ENCODE measurements at regions of chr4 and their contacts with region 1.

Region 1: DNA sequence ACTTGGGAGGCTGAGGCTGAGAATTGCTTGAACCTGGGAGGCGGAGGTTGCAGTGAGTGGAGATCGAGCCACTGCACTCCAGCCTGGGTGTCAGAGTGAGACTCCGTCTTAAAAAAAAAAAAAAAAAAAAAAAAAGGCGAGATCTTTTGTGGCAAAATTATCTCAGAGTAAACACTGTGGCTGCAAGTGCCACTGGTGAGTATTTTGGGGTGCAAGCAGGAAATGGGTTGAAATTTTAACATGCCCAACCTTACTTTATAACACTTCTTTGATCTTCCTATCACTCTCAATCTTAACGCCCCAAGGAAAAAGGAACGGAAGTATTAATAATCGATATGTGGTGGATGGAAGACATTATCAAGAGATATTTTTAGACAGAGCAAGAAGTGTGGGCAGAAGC is 32.1 kb downstream of the SLC34A2 start:
- DNase-seq: no peak
- ATAC-seq: no peak
- H3K4me3 ChIP-seq: no peak overlapping the region
- H3K27ac ChIP-seq: no peak overlapping the region
- H3K4me1 ChIP-seq: no peaks in the 10 kb centered on the region
- H3K27me3 ChIP-seq: no peaks in the 10 kb centered on the region
- CTCF ChIP-seq: no peak

Region 2: GRCh38 chr4:25477221-25477620 is 210.6 kb before region 1 on chr4:
- CTCF ChIA-PET with region 1: interaction called, 11 read pairs
- POLR2A ChIA-PET with region 1: no interaction called
- in situ Hi-C with region 1: no loop called
- intact Hi-C with region 1: no loop called
- DNase-seq: no peak
- ATAC-seq: no peak
- H3K4me3 ChIP-seq: no peak overlapping the region
- H3K27ac ChIP-seq: no peak overlapping the region
- H3K4me1 ChIP-seq: no peaks in the 10 kb centered on the region
- H3K27me3 ChIP-seq: no peaks in the 10 kb centered on the region
- CTCF ChIP-seq: no peak